GM12878 (cell line): ENCODE measurements at regions of chr5 and their contacts with region 1.

Region 1: DNA sequence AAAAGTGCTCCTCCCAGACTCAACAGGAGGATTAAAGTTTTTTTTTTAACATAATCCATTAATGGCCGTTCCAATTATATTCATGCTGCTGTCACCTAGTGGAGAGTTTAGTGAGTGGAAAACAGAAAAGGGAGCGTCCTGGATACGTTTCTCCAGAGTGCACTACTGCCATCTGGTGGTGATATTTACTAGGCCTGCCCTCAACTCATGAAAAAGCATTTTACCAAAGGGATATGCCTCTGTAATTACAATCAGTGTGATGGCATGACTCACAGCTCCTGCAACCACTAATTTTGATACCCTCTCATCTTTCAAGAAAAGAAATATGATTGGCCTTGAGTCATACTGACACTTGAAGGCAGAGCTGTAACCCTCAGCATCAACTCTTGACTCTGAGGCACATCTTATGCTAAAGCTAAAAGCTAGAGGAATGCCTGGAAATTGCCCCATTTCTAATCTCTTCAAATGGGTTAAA is 20.0 kb downstream of the MINAR2 start:
- DNase-seq: peak; percentile 32
- ATAC-seq: peak; percentile 95
- H3K4me3 ChIP-seq: no peak overlapping the region
- H3K27ac ChIP-seq: no peak overlapping the region
- H3K4me1 ChIP-seq: no peaks in the 10 kb centered on the region
- H3K27me3 ChIP-seq: no peaks in the 10 kb centered on the region
- CTCF ChIP-seq: peak; percentile 84 to 99 (median 98)
- EP300 ChIP-seq: no peak
- POLR2A ChIP-seq: no peak
- RAD21 ChIP-seq: peak; percentile 88

Region 2: DNA sequence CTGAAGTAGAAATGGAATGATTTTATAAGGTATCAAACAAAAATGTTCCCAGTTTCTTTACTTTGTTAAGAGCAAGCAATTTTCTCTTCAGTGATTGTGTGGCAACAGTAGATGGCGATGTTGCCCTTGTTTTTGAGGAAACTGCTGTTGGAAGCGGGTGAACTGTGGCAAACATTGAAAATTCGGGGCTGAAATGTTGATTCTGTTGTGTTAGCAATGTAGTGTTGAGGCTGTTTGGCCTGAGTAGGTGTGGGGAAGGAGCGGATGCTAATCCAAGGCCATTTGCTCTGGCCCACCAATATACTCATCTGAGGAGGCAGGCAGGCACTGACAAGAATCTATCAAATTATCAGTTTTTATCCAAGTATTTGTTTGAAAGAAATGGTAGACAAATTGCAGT is 1554.6 kb before region 1 on chr5:
- CTCF ChIA-PET with region 1: interaction called, 4 read pairs
- POLR2A ChIA-PET with region 1: no interaction called
- RAD21 ChIA-PET with region 1: no interaction called
- SMC1A ChIA-PET with region 1: no interaction called
- in situ Hi-C with region 1: loop called (anchors 25 kb)
- intact Hi-C with region 1: loop called (anchors 5 kb)
- DNase-seq: no peak
- ATAC-seq: peak; percentile 83
- H3K4me3 ChIP-seq: no peak overlapping the region
- H3K27ac ChIP-seq: no peak overlapping the region
- H3K4me1 ChIP-seq: no peaks in the 10 kb centered on the region
- H3K27me3 ChIP-seq: no peaks in the 10 kb centered on the region
- CTCF ChIP-seq: peak; percentile 66 to 85 (median 71); a peak in 5 of 6 replicates
- EP300 ChIP-seq: no peak
- POLR2A ChIP-seq: no peak
- RAD21 ChIP-seq: peak; percentile 96

Region 3: DNA sequence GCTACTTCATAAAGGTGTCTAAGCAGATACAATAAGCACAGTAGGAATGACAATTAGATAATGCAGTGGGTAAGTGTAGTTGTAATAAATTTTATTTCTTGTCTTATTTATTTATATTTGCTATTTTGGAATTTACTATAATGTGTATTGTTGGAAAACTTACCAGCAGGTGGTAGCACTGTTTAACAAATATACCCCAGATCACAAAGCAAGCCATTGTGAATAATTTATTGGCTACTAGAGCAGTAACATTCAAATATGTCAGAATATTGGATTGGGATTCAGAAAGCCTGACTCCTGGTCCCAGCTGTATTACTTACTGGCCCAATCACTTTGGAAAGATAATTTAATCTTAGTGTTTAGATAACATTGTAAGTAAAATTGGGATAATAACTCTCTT is 595.4 kb before region 1 on chr5:
- CTCF ChIA-PET with region 1: no interaction called
- POLR2A ChIA-PET with region 1: no interaction called
- RAD21 ChIA-PET with region 1: no interaction called
- SMC1A ChIA-PET with region 1: no interaction called
- in situ Hi-C with region 1: no loop called
- intact Hi-C with region 1: loop called (anchors 5 kb)
- DNase-seq: no peak
- ATAC-seq: no peak
- H3K4me3 ChIP-seq: no peak overlapping the region
- H3K27ac ChIP-seq: no peak overlapping the region
- H3K4me1 ChIP-seq: no peaks in the 10 kb centered on the region
- H3K27me3 ChIP-seq: no peaks in the 10 kb centered on the region
- CTCF ChIP-seq: no peak
- EP300 ChIP-seq: no peak
- POLR2A ChIP-seq: no peak
- RAD21 ChIP-seq: no peak

Region 4: DNA sequence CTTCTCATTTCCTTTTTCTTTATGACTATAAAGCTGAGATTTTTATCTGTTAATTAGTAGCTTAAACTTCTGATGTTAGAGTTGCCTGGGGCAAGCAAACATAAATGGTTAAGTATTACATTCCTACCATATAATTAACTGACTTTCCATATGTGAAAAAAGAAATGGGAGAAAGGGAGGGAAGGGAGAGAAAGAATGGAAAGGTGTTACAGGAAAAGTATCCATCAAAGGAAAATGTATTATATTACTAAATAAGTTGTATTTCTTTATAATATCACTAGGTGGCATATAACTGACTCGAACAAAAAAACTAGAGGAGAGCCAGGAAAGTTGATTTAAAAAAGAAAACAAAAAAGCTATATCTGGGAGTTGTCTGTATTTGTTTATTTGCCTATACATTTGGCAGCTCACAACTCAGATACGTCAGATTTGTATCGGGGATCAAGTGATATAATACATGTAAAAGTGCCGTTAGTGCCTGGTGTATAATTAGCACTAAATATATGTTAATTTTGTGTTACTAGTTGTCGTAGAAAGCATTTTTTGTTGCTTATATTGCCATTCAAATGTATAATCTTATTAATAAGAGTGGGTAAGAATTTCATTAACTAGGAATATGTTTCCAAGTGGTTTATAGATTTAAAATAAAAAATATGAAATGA is 367.5 kb before region 1 on chr5:
- CTCF ChIA-PET with region 1: interaction called, 7 read pairs
- POLR2A ChIA-PET with region 1: no interaction called
- RAD21 ChIA-PET with region 1: no interaction called
- SMC1A ChIA-PET with region 1: no interaction called
- in situ Hi-C with region 1: no loop called
- intact Hi-C with region 1: loop called (anchors 5 kb)
- DNase-seq: no peak
- ATAC-seq: no peak
- H3K4me3 ChIP-seq: no peak overlapping the region
- H3K27ac ChIP-seq: no peak overlapping the region
- H3K4me1 ChIP-seq: no peaks in the 10 kb centered on the region
- H3K27me3 ChIP-seq: no peaks in the 10 kb centered on the region
- CTCF ChIP-seq: no peak
- EP300 ChIP-seq: no peak
- POLR2A ChIP-seq: no peak
- RAD21 ChIP-seq: no peak

Region 5: DNA sequence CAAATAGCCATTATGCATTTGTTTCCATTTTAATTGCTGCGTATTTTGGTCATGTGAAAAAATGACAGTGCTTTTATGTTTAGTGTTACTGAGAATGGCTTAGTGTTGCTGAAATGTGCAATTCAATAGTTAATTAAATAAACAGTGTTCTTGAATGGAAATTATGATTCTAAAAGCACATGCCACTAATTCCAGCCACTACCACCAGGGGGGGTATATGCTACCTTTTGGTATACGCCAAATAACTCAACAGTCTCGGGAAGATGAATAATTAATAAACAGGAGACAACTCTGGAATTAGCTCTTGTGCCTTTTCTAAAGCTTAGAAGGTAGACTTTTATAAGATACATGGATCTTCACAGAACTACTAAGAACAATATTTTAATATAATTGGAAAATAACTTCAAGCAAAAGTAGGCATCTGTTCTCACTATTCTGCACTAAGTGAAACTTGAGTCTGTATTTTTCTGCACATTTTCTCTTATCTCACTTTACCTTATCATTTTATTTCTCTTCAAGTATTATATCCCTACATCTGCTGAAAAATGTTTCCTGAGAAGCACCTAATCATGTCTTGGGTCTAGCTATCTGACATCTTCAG is 103.5 kb before region 1 on chr5:
- CTCF ChIA-PET with region 1: interaction called, 27 read pairs
- POLR2A ChIA-PET with region 1: no interaction called
- RAD21 ChIA-PET with region 1: interaction called, 4 read pairs
- SMC1A ChIA-PET with region 1: interaction called, 7 read pairs
- in situ Hi-C with region 1: loop called (anchors 5 kb)
- intact Hi-C with region 1: loop called (anchors 1 kb)
- DNase-seq: no peak
- ATAC-seq: peak; percentile 64; the same call in 2 of the 3 replicates
- H3K4me3 ChIP-seq: no peak overlapping the region
- H3K27ac ChIP-seq: no peak overlapping the region
- H3K4me1 ChIP-seq: no peaks in the 10 kb centered on the region
- H3K27me3 ChIP-seq: no peaks in the 10 kb centered on the region
- CTCF ChIP-seq: peak; percentile 65 to 81 (median 78)
- EP300 ChIP-seq: no peak
- POLR2A ChIP-seq: no peak
- RAD21 ChIP-seq: peak; percentile 45

Region 6: GRCh38 chr5:129830288-129830687 is 62.3 kb after region 1 on chr5:
- CTCF ChIA-PET with region 1: no interaction called
- POLR2A ChIA-PET with region 1: no interaction called
- RAD21 ChIA-PET with region 1: no interaction called
- SMC1A ChIA-PET with region 1: no interaction called
- in situ Hi-C with region 1: no loop called
- intact Hi-C with region 1: no loop called
- DNase-seq: no peak
- ATAC-seq: no peak
- H3K4me3 ChIP-seq: no peak overlapping the region
- H3K27ac ChIP-seq: no peak overlapping the region
- H3K4me1 ChIP-seq: no peaks in the 10 kb centered on the region
- H3K27me3 ChIP-seq: no peaks in the 10 kb centered on the region
- CTCF ChIP-seq: no peak
- EP300 ChIP-seq: no peak
- POLR2A ChIP-seq: no peak
- RAD21 ChIP-seq: no peak

Region 7: GRCh38 chr5:129852747-129853352 is 84.9 kb after region 1 on chr5:
- CTCF ChIA-PET with region 1: interaction called, 175 read pairs
- POLR2A ChIA-PET with region 1: no interaction called
- RAD21 ChIA-PET with region 1: interaction called, 40 read pairs
- SMC1A ChIA-PET with region 1: interaction called, 74 read pairs
- in situ Hi-C with region 1: loop called (anchors 5 kb)
- intact Hi-C with region 1: loop called (anchors 1 kb)
- DNase-seq: peak; percentile 8
- ATAC-seq: peak; percentile 99
- H3K4me3 ChIP-seq: no peak overlapping the region
- H3K27ac ChIP-seq: no peak overlapping the region
- H3K4me1 ChIP-seq: no peaks in the 10 kb centered on the region
- H3K27me3 ChIP-seq: no peaks in the 10 kb centered on the region
- CTCF ChIP-seq: peak; percentile 76 to 95 (median 93)
- EP300 ChIP-seq: no peak
- POLR2A ChIP-seq: no peak
- RAD21 ChIP-seq: peak; percentile 76

Region 8: GRCh38 chr5:130002183-130002582 is 234.2 kb after region 1 on chr5:
- CTCF ChIA-PET with region 1: no interaction called
- POLR2A ChIA-PET with region 1: no interaction called
- RAD21 ChIA-PET with region 1: no interaction called
- SMC1A ChIA-PET with region 1: no interaction called
- in situ Hi-C with region 1: no loop called
- intact Hi-C with region 1: no loop called
- DNase-seq: no peak
- ATAC-seq: no peak
- H3K4me3 ChIP-seq: no peak overlapping the region
- H3K27ac ChIP-seq: no peak overlapping the region
- H3K4me1 ChIP-seq: no peaks in the 10 kb centered on the region
- H3K27me3 ChIP-seq: no peaks in the 10 kb centered on the region
- CTCF ChIP-seq: no peak
- EP300 ChIP-seq: no peak
- POLR2A ChIP-seq: no peak
- RAD21 ChIP-seq: no peak

Region 9: GRCh38 chr5:131109540-131110255 is 1341.8 kb after region 1 on chr5:
- CTCF ChIA-PET with region 1: interaction called, 11 read pairs
- POLR2A ChIA-PET with region 1: no interaction called
- RAD21 ChIA-PET with region 1: interaction called, 3 read pairs
- SMC1A ChIA-PET with region 1: interaction called, 7 read pairs
- in situ Hi-C with region 1: loop called (anchors 10 kb)
- intact Hi-C with region 1: loop called (anchors 5 kb)
- DNase-seq: peak; percentile 12
- ATAC-seq: peak; percentile 94
- H3K4me3 ChIP-seq: no peak overlapping the region
- H3K27ac ChIP-seq: no peak overlapping the region
- H3K4me1 ChIP-seq: no peaks in the 10 kb centered on the region
- H3K27me3 ChIP-seq: 0 out of 4 replicates have a peak, but pooled peaks cover 0 to 2% of the 10 kb centered on the region in 2 experiments
- CTCF ChIP-seq: peak; percentile 60 to 76 (median 68)
- EP300 ChIP-seq: no peak
- POLR2A ChIP-seq: no peak
- RAD21 ChIP-seq: peak; percentile 84